CD8-positive, alpha-beta T cell (primary cell): ENCODE measurements at regions of chr6 and their contacts with region 1.

Region 1: GRCh38 chr6:79869600-79870084 is 77.7 kb downstream of the ELOVL4 start:
- DNase-seq: peak; percentile 57 to 87 (median 77)
- ATAC-seq: peak; percentile 100
- H3K4me3 ChIP-seq: peak overlapping the region in 1 of 2 experiments; percentile 29
- H3K4me3 Mint-ChIP-seq: peak overlapping the region; percentile 69
- H3K27ac ChIP-seq: no peak overlapping the region
- H3K27ac Mint-ChIP-seq: no peak overlapping the region
- H3K4me1 ChIP-seq: no peaks in the 10 kb centered on the region
- H3K4me1 Mint-ChIP-seq: peaks cover 10% of the 10 kb centered on the region
- H3K27me3 ChIP-seq: no peaks in the 10 kb centered on the region
- H3K27me3 Mint-ChIP-seq: peaks cover 4% of the 10 kb centered on the region
- CTCF ChIP-seq: peak; percentile 91

Region 2: DNA sequence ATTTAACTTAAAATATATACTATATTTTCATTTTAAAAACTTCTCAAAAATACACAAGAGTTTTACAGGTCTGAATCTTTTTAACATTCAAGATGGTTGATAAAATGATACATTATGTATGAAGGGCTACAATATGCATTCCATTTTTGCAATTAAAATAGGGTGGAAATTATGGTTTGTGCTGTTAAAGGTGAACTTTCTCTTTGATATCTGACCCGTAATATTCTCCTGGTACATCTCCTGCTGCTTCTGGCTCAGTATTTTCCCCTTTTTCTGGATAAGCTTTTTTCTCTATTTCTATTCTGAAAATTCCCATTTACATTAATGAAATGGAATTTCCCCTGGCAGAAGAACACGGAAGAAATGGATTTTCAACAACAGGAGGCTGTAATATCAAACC is 305.0 kb before region 1 on chr6:
- CTCF ChIA-PET with region 1: no interaction called
- POLR2A ChIA-PET with region 1: no interaction called
- intact Hi-C with region 1: loop called in 1 of 2 experiments (anchors 5 kb)
- DNase-seq: no peak
- ATAC-seq: no peak
- H3K4me3 ChIP-seq: no peak overlapping the region
- H3K4me3 Mint-ChIP-seq: no peak overlapping the region
- H3K27ac ChIP-seq: no peak overlapping the region
- H3K27ac Mint-ChIP-seq: no peak overlapping the region
- H3K4me1 ChIP-seq: no peaks in the 10 kb centered on the region
- H3K4me1 Mint-ChIP-seq: no peaks in the 10 kb centered on the region
- H3K27me3 ChIP-seq: no peaks in the 10 kb centered on the region
- H3K27me3 Mint-ChIP-seq: peaks cover 2% of the 10 kb centered on the region
- CTCF ChIP-seq: no peak

Region 3: GRCh38 chr6:79777713-79778579 is 91.7 kb before region 1 on chr6:
- CTCF ChIA-PET with region 1: interaction called, 6 read pairs
- POLR2A ChIA-PET with region 1: no interaction called
- intact Hi-C with region 1: loop called (anchors 1 to 2 kb)
- DNase-seq: peak; percentile 65 to 90 (median 82)
- ATAC-seq: peak; percentile 97
- H3K4me3 ChIP-seq: peak overlapping the region; percentile 36 to 38
- H3K4me3 Mint-ChIP-seq: peak overlapping the region; percentile 78
- H3K27ac ChIP-seq: no peak overlapping the region
- H3K27ac Mint-ChIP-seq: no peak overlapping the region
- H3K4me1 ChIP-seq: peaks cover 4% of the 10 kb centered on the region
- H3K4me1 Mint-ChIP-seq: peaks cover 6% of the 10 kb centered on the region
- H3K27me3 ChIP-seq: no peaks in the 10 kb centered on the region
- H3K27me3 Mint-ChIP-seq: peaks cover 2% of the 10 kb centered on the region
- CTCF ChIP-seq: peak; percentile 94

Region 4: GRCh38 chr6:79949233-79949632 is 79.6 kb after region 1 on chr6:
- CTCF ChIA-PET with region 1: interaction called, 12 read pairs
- POLR2A ChIA-PET with region 1: no interaction called
- intact Hi-C with region 1: loop called in 1 of 2 experiments (anchors 2 kb)
- DNase-seq: peak in 7 of 9 experiments; percentile 25 to 88 (median 57)
- ATAC-seq: peak; percentile 24
- H3K4me3 ChIP-seq: no peak overlapping the region
- H3K4me3 Mint-ChIP-seq: peak overlapping the region; percentile 9
- H3K27ac ChIP-seq: no peak overlapping the region
- H3K27ac Mint-ChIP-seq: peak overlapping the region; percentile 5
- H3K4me1 ChIP-seq: peaks cover 16% of the 10 kb centered on the region
- H3K4me1 Mint-ChIP-seq: peaks cover 27% of the 10 kb centered on the region
- H3K27me3 ChIP-seq: no peaks in the 10 kb centered on the region
- H3K27me3 Mint-ChIP-seq: peaks cover 2% of the 10 kb centered on the region
- CTCF ChIP-seq: peak; percentile 80

Region 5: DNA sequence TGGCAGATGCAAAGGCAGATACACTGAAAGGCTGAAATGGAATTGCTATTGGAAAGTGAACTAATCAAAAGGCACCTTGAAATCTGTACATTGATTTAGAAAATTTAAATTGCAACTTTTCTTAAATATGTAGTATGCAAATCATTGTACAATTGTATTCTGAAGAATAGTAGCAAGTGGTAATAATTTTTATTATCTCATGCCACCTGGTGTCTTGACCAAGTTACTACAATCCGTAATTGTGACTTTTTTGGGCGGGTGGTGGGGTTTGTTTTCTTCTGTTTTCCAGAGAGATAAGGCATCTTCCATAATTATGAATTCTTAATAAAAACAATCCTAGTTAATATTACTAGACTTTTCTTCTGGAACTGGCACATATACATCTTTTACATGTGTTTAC is 224.4 kb after region 1 on chr6:
- CTCF ChIA-PET with region 1: interaction called, 13 read pairs
- POLR2A ChIA-PET with region 1: no interaction called
- intact Hi-C with region 1: loop called (anchors 1 to 5 kb)
- DNase-seq: peak in 3 of 9 experiments; percentile 12 to 53 (median 39)
- ATAC-seq: peak; percentile 68
- H3K4me3 ChIP-seq: no peak overlapping the region
- H3K4me3 Mint-ChIP-seq: no peak overlapping the region
- H3K27ac ChIP-seq: no peak overlapping the region
- H3K27ac Mint-ChIP-seq: no peak overlapping the region
- H3K4me1 ChIP-seq: no peaks in the 10 kb centered on the region
- H3K4me1 Mint-ChIP-seq: peaks cover 6% of the 10 kb centered on the region
- H3K27me3 ChIP-seq: no peaks in the 10 kb centered on the region
- H3K27me3 Mint-ChIP-seq: peaks cover 5% of the 10 kb centered on the region
- CTCF ChIP-seq: peak; percentile 83